Activated CD4-positive, alpha-beta memory T cell treated with anti-CD3 and anti-CD28 coated beads for 36 hours (primary cell): ENCODE measurements at regions of chr4 and their contacts with region 1.

Region 1: GRCh38 chr4:184664448-184665210 is 15.1 kb downstream of the PRIMPOL start:
- DNase-seq: no peak
- H3K4me3 Mint-ChIP-seq: no peak overlapping the region
- H3K27ac Mint-ChIP-seq: no peak overlapping the region
- H3K4me1 Mint-ChIP-seq: peaks cover 19% of the 10 kb centered on the region
- H3K27me3 Mint-ChIP-seq: no peaks in the 10 kb centered on the region

Region 2: DNA sequence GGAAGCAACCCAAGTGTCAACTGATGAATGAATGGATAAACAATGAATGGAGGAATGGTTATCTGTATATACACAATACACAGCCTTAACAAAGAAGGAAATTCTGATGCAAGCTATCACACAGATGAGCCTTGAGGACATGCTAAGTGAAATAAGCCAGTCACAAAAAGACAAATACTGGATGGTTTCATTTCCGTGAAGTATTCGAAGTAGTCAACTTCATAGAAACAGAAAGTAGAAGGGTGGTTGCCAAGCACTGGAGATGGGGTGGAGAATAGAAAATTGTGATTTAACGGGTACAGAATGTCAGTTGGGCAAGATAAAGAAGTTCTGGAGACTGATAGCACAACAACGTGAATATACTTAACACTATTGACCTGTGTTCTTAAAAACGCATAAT is 41.1 kb after region 1 on chr4:
- CTCF ChIA-PET with region 1: no interaction called
- POLR2A ChIA-PET with region 1: no interaction called
- intact Hi-C with region 1: loop called (anchors 5 kb)
- DNase-seq: no peak
- H3K4me3 Mint-ChIP-seq: no peak overlapping the region
- H3K27ac Mint-ChIP-seq: peak overlapping the region; percentile 34
- H3K4me1 Mint-ChIP-seq: peaks cover 25% of the 10 kb centered on the region
- H3K27me3 Mint-ChIP-seq: no peaks in the 10 kb centered on the region